ENCODE measurements at regions of chr2 and their contacts with region 1.

Region 1: DNA sequence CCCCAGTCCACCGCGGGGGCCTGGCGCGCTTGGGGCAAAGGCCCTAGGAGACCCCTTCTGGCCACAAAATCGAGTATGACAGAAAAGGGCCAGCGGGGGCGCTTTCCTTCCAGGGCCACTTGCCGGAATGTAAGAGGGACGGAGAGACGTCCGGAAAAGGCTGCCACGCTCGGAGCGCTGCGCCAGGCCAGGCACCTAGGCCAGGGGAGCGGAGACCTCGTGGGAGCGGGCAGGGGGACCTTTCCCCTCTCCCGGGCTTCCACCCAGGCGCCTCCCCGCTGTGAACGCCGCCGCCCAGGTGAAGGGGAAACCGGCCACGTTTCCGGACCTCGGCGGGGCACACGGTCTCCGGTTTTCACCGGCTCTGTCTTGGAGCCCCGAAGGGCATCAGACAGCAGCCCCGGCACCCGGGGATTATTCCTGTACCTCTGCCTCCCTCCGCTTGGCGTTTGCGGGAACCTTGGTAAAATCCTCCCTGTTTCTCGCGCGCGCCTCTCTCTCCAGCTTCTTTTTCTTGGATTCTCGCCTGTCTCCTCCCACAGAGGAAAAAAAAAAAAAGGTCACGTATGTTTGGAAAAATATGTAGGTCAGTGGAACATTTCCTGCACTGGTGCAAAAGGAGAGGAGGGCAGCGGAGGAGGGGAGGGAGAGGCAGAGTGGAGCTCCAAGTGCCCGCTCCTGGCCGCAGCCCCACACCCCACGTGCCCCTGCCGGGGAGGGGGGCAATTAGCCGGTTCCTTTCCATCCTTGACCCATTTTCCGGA is 1.2 kb upstream of the NPAS2 start:
- DNase-seq: peak; percentile 62
- H3K4me3 ChIP-seq: peak overlapping the region; percentile 72 to 74
- H3K27ac ChIP-seq: peak overlapping the region; percentile 88
- H3K4me1 ChIP-seq: no peaks in the 10 kb centered on the region
- H3K27me3 ChIP-seq: no peaks in the 10 kb centered on the region
- CTCF ChIP-seq: peak in 2 of 4 experiments; percentile 20 to 21
- POLR2A ChIP-seq: peak; percentile 46

Region 2: GRCh38 chr2:100730346-100730745 is 88.4 kb before region 1 on chr2:
- intact Hi-C with region 1: loop called (anchors 5 kb)
- DNase-seq: peak; percentile 53
- H3K4me3 ChIP-seq: no peak overlapping the region
- H3K27ac ChIP-seq: no peak overlapping the region
- H3K4me1 ChIP-seq: no peaks in the 10 kb centered on the region
- H3K27me3 ChIP-seq: no peaks in the 10 kb centered on the region
- CTCF ChIP-seq: peak; percentile 20 to 71 (median 60)
- POLR2A ChIP-seq: no peak

Region 3: GRCh38 chr2:100852999-100853908 is 34.5 kb after region 1 on chr2:
- intact Hi-C with region 1: no loop called
- DNase-seq: no peak
- H3K4me3 ChIP-seq: no peak overlapping the region
- H3K27ac ChIP-seq: no peak overlapping the region
- H3K4me1 ChIP-seq: no peaks in the 10 kb centered on the region
- H3K27me3 ChIP-seq: no peaks in the 10 kb centered on the region
- CTCF ChIP-seq: no peak
- POLR2A ChIP-seq: no peak